Mammary epithelial cell (primary cell): ENCODE measurements at regions of chr7 and their contacts with region 1.

Region 1: GRCh38 chr7:774161-775109 is 47.4 kb upstream of the PRKAR1B start:
- DNase-seq: peak; percentile 36
- H3K4me3 ChIP-seq: no peak overlapping the region
- H3K27ac ChIP-seq: no peak overlapping the region
- H3K4me1 ChIP-seq: no peaks in the 10 kb centered on the region
- H3K27me3 ChIP-seq: no peaks in the 10 kb centered on the region
- CTCF ChIP-seq: peak; percentile 91 to 95

Region 2: DNA sequence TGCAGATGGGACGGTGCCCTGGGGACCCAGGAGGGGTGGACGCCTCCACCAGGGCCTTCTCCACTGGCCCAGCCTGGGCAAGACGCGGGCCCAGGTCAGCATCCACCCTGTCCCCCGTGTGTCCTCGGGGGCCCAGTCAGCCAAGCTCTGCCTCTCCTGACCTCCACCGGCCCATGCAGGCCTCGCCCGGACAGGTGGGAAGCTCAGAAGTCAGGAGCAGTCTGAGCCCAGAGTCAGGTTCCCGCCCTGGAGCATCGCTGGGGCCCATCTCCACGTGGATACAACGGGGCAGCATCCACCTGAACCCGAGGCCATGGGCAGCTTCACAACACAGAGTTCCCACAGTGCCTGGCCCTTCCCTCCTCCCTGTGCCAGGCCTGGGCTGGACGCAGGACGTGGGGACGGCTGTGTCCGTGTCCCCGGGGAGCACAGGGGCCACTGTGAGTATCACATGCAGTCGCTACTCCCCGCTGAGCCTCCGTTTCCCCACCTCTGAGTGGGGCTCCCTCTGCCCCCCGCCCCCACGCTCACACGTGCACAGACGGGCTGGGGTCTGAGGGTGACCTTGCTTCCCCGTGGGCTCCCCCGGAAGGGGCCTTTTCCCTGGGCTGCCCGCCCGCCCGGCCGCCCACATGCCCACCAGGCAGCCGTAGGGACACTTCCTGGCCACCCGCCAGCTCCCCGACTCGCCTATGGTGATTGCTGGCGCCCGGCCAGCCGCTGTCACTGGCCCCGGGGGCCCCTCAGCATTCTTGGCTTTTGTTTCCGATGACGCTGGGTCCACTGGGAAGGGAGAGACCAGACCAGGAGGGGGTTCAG is 319.1 kb before region 1 on chr7:
- CTCF ChIA-PET with region 1: no interaction called
- dilution Hi-C with region 1: no loop called
- in situ Hi-C with region 1: no loop called
- intact Hi-C with region 1: loop called (anchors 5 kb)
- DNase-seq: peak; percentile 27
- H3K4me3 ChIP-seq: no peak overlapping the region
- H3K27ac ChIP-seq: no peak overlapping the region
- H3K4me1 ChIP-seq: peaks cover 18% of the 10 kb centered on the region
- H3K27me3 ChIP-seq: no peaks in the 10 kb centered on the region
- CTCF ChIP-seq: no peak

Region 3: GRCh38 chr7:513521-514166 is 260.8 kb before region 1 on chr7:
- CTCF ChIA-PET with region 1: no interaction called
- dilution Hi-C with region 1: no loop called
- in situ Hi-C with region 1: loop called in 1 of 2 experiments (anchors 10 kb)
- intact Hi-C with region 1: loop called (anchors 1 kb)
- DNase-seq: peak; percentile 55
- H3K4me3 ChIP-seq: peak overlapping the region in 1 of 3 experiments; percentile 7
- H3K27ac ChIP-seq: peak overlapping the region; percentile 44
- H3K4me1 ChIP-seq: peaks cover 50% of the 10 kb centered on the region
- H3K27me3 ChIP-seq: no peaks in the 10 kb centered on the region
- CTCF ChIP-seq: peak in 1 of 2 donors; percentile 36

Region 4: DNA sequence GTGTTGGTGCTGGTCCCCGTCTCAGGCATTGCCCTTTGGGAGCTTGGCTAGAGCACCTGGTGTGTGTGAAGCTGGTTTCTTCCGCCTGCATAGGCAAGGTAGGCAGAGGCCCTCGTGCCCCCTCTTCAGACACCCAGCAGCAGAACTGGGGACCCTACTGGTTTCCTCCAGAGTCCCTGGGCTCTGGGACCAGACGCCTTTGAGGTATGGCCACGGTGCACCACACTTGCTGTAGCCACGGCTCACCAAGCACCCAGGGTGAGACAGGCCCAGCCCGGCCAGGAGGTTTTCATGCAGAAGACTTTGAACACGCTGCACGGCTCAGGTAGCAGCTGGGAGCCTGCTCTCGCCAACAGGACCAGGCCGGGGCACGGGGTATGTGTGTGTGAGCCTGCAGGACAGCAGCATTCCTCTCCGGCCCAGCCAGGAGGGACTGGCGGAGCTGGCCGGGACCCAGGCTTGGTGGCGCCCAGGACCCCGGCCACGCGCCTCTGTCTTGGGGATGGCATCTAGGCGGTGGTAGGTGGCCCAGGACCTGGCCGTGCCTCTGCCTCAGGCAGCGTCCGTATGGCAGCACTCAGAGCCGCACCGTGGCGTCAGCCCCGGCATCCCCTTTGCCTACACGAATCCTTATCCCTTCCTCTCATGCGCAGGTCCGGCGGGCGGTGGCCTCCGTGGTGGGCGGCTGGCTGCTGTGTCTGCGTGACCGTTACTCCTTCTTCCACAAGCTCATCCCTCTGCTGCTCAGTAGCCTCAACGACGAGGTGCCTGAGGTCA is 34.1 kb before region 1 on chr7:
- CTCF ChIA-PET with region 1: no interaction called
- dilution Hi-C with region 1: loop called (anchors 5 kb)
- in situ Hi-C with region 1: no loop called
- intact Hi-C with region 1: no loop called
- DNase-seq: no peak
- H3K4me3 ChIP-seq: no peak overlapping the region
- H3K27ac ChIP-seq: no peak overlapping the region
- H3K4me1 ChIP-seq: no peaks in the 10 kb centered on the region
- H3K27me3 ChIP-seq: no peaks in the 10 kb centered on the region
- CTCF ChIP-seq: no peak